Psoas muscle (tissue), 8 donors: ENCODE measurements at regions of chr1 and their contacts with region 1.

Region 1: GRCh38 chr1:23634842-23635651 is 56.6 kb upstream of the RPL11 start:
- DNase-seq: peak; percentile 60 to 61
- ATAC-seq: peak; percentile 58 to 72 (median 68)
- H3K4me3 ChIP-seq: peak overlapping the region; percentile 61
- H3K27ac ChIP-seq: peak overlapping the region; percentile 69
- H3K4me1 ChIP-seq: peaks cover 11% of the 10 kb centered on the region
- H3K27me3 ChIP-seq: no peaks in the 10 kb centered on the region
- CTCF ChIP-seq: peak; percentile 88

Region 2: GRCh38 chr1:23539698-23540266 is 95.3 kb before region 1 on chr1:
- intact Hi-C with region 1: loop called (anchors 1 to 2 kb)
- DNase-seq: peak; percentile 83 to 91
- ATAC-seq: peak; percentile 87 to 94 (median 89)
- H3K4me3 ChIP-seq: peak overlapping the region; percentile 26
- H3K27ac ChIP-seq: peak overlapping the region; percentile 5
- H3K4me1 ChIP-seq: peaks cover 2% of the 10 kb centered on the region
- H3K27me3 ChIP-seq: no peaks in the 10 kb centered on the region
- CTCF ChIP-seq: peak; percentile 90

Region 3: GRCh38 chr1:23559136-23559984 is 75.7 kb before region 1 on chr1 and contains the start of gene ID3:
- intact Hi-C with region 1: no loop called
- DNase-seq: peak; percentile 96 to 98
- ATAC-seq: peak; percentile 67 to 82 (median 74)
- H3K4me3 ChIP-seq: peak within 1 kb of the TSS; percentile 74
- H3K27ac ChIP-seq: peak within 1 kb of the TSS; percentile 79
- H3K4me1 ChIP-seq: peaks cover 40% of the 10 kb centered on the region
- H3K27me3 ChIP-seq: no peaks in the 10 kb centered on the region
- CTCF ChIP-seq: no peak
- total RNA-seq, gene ID3: 17.8 to 97.3 (median 81.2) TPM

Region 4: GRCh38 chr1:23591460-23592208 is 43.4 kb before region 1 on chr1:
- intact Hi-C with region 1: no loop called
- DNase-seq: peak; percentile 26 to 62
- ATAC-seq: peak; percentile 41 to 54 (median 50)
- H3K4me3 ChIP-seq: no peak overlapping the region
- H3K27ac ChIP-seq: peak overlapping the region; percentile 71
- H3K4me1 ChIP-seq: peaks cover 33% of the 10 kb centered on the region
- H3K27me3 ChIP-seq: no peaks in the 10 kb centered on the region
- CTCF ChIP-seq: no peak

Region 5: GRCh38 chr1:23777979-23778814 is 143.2 kb after region 1 on chr1 and contains the start of gene PITHD1:
- intact Hi-C with region 1: no loop called
- DNase-seq: peak; percentile 81 to 91
- ATAC-seq: peak; percentile 88 to 93 (median 92)
- H3K4me3 ChIP-seq: peak within 1 kb of the TSS; percentile 78
- H3K27ac ChIP-seq: peak within 1 kb of the TSS; percentile 92
- H3K4me1 ChIP-seq: peaks cover 33% of the 10 kb centered on the region
- H3K27me3 ChIP-seq: no peaks in the 10 kb centered on the region
- CTCF ChIP-seq: no peak
- total RNA-seq, gene PITHD1: 53.4 to 72.1 (median 63.4) TPM